ENCODE measurements at regions of chr14 and their contacts with region 1.

Region 1: GRCh38 chr14:57302883-57303282 is 34.1 kb downstream of the AP5M1 start:
- DNase-seq: no peak
- H3K4me3 ChIP-seq: no peak overlapping the region
- H3K27ac ChIP-seq: no peak overlapping the region
- H3K4me1 ChIP-seq: no peaks in the 10 kb centered on the region
- H3K27me3 ChIP-seq: no peaks in the 10 kb centered on the region
- CTCF ChIP-seq: no peak

Region 2: DNA sequence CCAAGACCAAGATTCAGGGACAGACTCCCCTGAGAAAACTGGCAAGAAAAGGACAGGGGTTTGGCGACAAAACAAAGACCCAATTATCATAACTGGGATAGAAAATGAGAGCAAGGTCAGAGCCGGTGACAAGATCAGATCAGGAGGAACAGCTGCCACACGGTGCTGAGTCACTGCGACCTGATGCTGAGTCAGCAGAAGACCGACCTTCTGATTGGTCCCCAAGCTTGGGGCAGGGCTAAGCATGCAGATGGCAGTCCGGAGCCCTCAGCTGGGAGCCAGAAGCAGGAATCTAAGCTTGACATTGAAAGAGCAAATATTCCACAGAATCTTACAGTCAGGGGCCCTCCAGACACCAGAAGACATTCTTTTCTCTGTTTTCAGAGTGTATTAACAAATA is 868.2 kb after region 1 on chr14:
- CTCF ChIA-PET with region 1: interaction called, 14 read pairs
- POLR2A ChIA-PET with region 1: no interaction called
- intact Hi-C with region 1: no loop called
- DNase-seq: peak; percentile 88
- H3K4me3 ChIP-seq: no peak overlapping the region
- H3K27ac ChIP-seq: no peak overlapping the region
- H3K4me1 ChIP-seq: peaks cover 12% of the 10 kb centered on the region
- H3K27me3 ChIP-seq: no peaks in the 10 kb centered on the region
- CTCF ChIP-seq: no peak

Measured in A673 (cell line).